Activated B cell treated with CpG ODN at 0.5 μM for 24 hours (primary cell): ENCODE measurements at regions of chr4 and their contacts with region 1.

Region 1: GRCh38 chr4:152500800-152501434 is 35.0 kb downstream of the FBXW7 start:
- DNase-seq: no peak
- ATAC-seq: peak; percentile 79
- H3K4me3 Mint-ChIP-seq: peak overlapping the region; percentile 44
- H3K27ac Mint-ChIP-seq: peak overlapping the region; percentile 83
- H3K4me1 Mint-ChIP-seq: peaks cover 29% of the 10 kb centered on the region
- H3K27me3 Mint-ChIP-seq: no peaks in the 10 kb centered on the region
- CTCF ChIP-seq: peak; percentile 84

Region 2: GRCh38 chr4:152408514-152409327 is 92.2 kb before region 1 on chr4:
- CTCF ChIA-PET with region 1: interaction called, 3 read pairs
- POLR2A ChIA-PET with region 1: no interaction called
- intact Hi-C with region 1: loop called (anchors 5 kb)
- DNase-seq: no peak
- ATAC-seq: no peak
- H3K4me3 Mint-ChIP-seq: no peak overlapping the region
- H3K27ac Mint-ChIP-seq: no peak overlapping the region
- H3K4me1 Mint-ChIP-seq: peaks cover 5% of the 10 kb centered on the region
- H3K27me3 Mint-ChIP-seq: no peaks in the 10 kb centered on the region
- CTCF ChIP-seq: no peak

Region 3: GRCh38 chr4:152424977-152425376 is 75.9 kb before region 1 on chr4:
- CTCF ChIA-PET with region 1: no interaction called
- POLR2A ChIA-PET with region 1: no interaction called
- intact Hi-C with region 1: no loop called
- DNase-seq: no peak
- ATAC-seq: no peak
- H3K4me3 Mint-ChIP-seq: no peak overlapping the region
- H3K27ac Mint-ChIP-seq: no peak overlapping the region
- H3K4me1 Mint-ChIP-seq: peaks cover 22% of the 10 kb centered on the region
- H3K27me3 Mint-ChIP-seq: no peaks in the 10 kb centered on the region
- CTCF ChIP-seq: no peak

Region 4: GRCh38 chr4:152454398-152455011 is 46.4 kb before region 1 on chr4:
- CTCF ChIA-PET with region 1: interaction called, 14 read pairs
- POLR2A ChIA-PET with region 1: no interaction called
- intact Hi-C with region 1: loop called (anchors 1 kb)
- DNase-seq: no peak
- ATAC-seq: no peak
- H3K4me3 Mint-ChIP-seq: no peak overlapping the region
- H3K27ac Mint-ChIP-seq: peak overlapping the region; percentile 41
- H3K4me1 Mint-ChIP-seq: peaks cover 50% of the 10 kb centered on the region
- H3K27me3 Mint-ChIP-seq: no peaks in the 10 kb centered on the region
- CTCF ChIP-seq: no peak

Region 5: DNA sequence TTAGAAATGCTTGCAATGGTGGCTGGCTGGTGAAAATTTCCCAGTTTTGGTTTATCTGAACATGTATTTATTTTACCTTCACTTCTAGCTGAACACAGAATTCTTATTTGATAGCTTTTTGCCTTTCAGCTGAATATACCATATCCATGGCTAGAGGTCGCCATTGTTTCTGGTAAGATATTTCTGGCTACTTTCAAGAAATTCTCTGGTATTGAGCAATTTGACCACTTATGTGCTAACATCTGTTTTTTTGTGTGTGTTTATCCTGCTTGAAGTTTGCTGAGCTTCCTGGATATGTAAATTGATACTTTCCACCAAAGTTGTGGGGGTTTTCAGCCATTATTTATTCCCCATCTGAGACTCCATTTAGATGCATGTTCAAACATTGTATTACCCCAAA is 40.4 kb before region 1 on chr4:
- CTCF ChIA-PET with region 1: interaction called, 14 read pairs
- POLR2A ChIA-PET with region 1: no interaction called
- intact Hi-C with region 1: no loop called
- DNase-seq: no peak
- ATAC-seq: no peak
- H3K4me3 Mint-ChIP-seq: peak overlapping the region; percentile 26
- H3K27ac Mint-ChIP-seq: peak overlapping the region; percentile 77
- H3K4me1 Mint-ChIP-seq: peaks cover 82% of the 10 kb centered on the region
- H3K27me3 Mint-ChIP-seq: no peaks in the 10 kb centered on the region
- CTCF ChIP-seq: no peak

Region 6: DNA sequence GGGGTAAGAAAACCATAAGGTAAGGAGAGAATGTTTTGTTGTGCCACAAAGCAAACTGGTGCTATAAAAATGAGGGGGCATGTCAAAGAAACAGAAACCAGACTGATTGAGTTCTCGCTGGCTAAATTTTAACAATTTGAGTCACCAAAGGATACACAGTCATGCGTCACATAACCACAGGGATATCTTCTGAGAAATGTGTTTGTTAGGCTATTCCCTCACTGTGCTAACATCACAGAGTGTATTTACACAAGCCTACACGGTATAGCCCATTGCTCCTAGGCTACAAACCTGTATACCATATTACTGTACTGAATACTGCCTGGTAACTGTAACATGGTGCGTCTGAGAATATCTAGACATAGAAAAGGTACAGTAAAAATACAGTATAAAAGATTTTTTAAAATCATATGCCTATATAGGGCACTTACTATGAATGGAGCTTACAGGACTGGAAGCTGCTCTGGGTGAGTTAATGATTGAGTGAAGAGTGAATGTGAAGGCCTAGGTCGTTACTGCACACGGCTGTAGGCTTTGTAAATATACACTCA is 15.1 kb before region 1 on chr4:
- CTCF ChIA-PET with region 1: interaction called, 8 read pairs
- POLR2A ChIA-PET with region 1: interaction called, 6 read pairs
- intact Hi-C with region 1: loop called (anchors 1 kb)
- DNase-seq: no peak
- ATAC-seq: peak; percentile 92
- H3K4me3 Mint-ChIP-seq: peak overlapping the region; percentile 5
- H3K27ac Mint-ChIP-seq: no peak overlapping the region
- H3K4me1 Mint-ChIP-seq: peaks cover 49% of the 10 kb centered on the region
- H3K27me3 Mint-ChIP-seq: no peaks in the 10 kb centered on the region
- CTCF ChIP-seq: no peak

Region 7: DNA sequence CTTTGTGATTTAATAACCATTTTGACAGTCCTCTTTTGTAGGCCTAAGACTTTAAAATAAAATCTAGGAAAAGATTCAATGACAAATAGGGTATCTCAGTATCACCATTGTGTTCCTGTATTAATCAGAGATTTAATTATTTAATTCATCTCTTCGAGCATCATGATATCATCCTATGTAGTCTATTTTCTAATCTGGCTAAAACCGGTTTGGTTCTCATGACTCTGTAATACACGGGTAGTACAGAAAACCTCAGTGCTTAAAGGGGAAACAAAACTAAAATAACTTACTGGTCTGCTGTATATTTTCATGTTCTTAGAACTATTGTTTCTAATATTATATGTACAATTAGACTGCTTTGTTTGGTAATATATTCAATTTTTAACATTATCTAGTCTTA is 58.7 kb after region 1 on chr4:
- CTCF ChIA-PET with region 1: interaction called, 7 read pairs
- POLR2A ChIA-PET with region 1: interaction called, 6 read pairs
- intact Hi-C with region 1: loop called (anchors 5 kb)
- DNase-seq: no peak
- ATAC-seq: peak; percentile 33
- H3K4me3 Mint-ChIP-seq: no peak overlapping the region
- H3K27ac Mint-ChIP-seq: peak overlapping the region; percentile 31
- H3K4me1 Mint-ChIP-seq: peaks cover 47% of the 10 kb centered on the region
- H3K27me3 Mint-ChIP-seq: no peaks in the 10 kb centered on the region
- CTCF ChIP-seq: no peak

Region 8: DNA sequence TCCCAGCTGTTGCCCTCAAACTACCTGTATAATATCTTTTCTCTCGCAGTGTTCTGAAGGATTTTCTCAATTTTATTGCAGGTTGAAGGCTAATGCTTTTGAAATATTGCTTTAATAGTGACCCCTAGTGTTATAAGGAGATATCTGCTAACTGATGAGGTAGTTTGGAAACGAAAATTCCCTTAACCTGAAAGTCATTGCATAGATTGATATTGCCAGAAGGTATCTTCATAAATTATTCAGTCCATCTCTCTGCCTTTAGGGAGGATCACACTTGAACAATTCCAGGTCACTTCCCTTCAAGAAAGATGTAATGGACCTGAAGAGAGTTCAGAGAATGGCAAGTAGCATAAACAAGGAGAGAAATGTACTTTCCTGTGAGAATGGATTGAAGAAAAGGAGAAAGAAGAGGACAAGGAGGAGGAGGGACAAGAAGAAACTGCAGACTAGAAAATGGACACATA is 234.5 kb after region 1 on chr4:
- CTCF ChIA-PET with region 1: interaction called, 74 read pairs
- POLR2A ChIA-PET with region 1: interaction called, 5 read pairs
- intact Hi-C with region 1: loop called (anchors 1 kb)
- DNase-seq: no peak
- ATAC-seq: no peak
- H3K4me3 Mint-ChIP-seq: no peak overlapping the region
- H3K27ac Mint-ChIP-seq: no peak overlapping the region
- H3K4me1 Mint-ChIP-seq: peaks cover 14% of the 10 kb centered on the region
- H3K27me3 Mint-ChIP-seq: peaks cover 2% of the 10 kb centered on the region
- CTCF ChIP-seq: peak; percentile 24